Activated B cell treated with CpG ODN at 0.5 μM for 24 hours (primary cell): ENCODE measurements at regions of chr4 and their contacts with region 1.

Region 1: GRCh38 chr4:74133786-74134499 is 24.0 kb upstream of the MTHFD2L start:
- DNase-seq: no peak
- ATAC-seq: no peak
- H3K4me3 Mint-ChIP-seq: no peak overlapping the region
- H3K27ac Mint-ChIP-seq: no peak overlapping the region
- H3K4me1 Mint-ChIP-seq: no peaks in the 10 kb centered on the region
- H3K27me3 Mint-ChIP-seq: peaks cover 20% of the 10 kb centered on the region
- CTCF ChIP-seq: no peak

Region 2: DNA sequence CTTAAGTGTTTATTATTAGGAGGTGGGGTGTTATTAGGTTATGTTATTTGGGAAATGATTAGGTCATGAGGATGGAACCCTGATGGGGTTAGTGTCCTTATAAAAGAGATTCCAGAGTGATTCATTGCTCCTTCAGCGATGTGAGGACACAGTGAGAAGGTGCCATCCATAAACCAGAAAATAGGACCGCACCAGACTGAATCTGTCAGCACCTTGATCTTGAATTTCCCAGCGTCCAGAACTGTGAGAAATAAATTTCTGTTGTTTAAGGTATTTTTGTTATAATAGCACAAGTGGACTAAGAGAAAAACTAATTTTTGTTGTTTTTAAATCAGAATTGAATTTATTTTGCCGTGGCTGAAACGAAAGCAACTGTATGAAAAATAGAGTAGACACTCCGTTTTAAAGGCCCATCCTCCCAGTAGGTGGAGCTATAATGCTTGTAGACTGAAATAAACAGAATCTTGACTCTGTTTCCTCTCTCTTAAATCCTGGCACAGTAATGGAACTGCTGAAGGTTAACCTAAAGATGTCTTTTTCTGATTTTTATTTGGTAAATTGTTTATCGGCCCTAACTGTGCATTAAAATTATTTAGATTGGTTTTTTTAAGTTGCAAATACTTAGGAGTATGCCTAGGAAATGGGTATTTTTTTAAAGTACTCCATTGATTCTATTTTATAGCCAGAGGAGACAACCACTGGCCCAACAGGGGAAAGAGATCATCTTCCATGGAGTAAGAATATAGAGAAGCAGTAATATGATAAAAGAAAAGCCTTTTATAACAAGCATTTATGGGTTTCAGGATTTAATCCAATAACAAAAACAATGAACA is 1431.7 kb before region 1 on chr4:
- CTCF ChIA-PET with region 1: no interaction called
- POLR2A ChIA-PET with region 1: no interaction called
- intact Hi-C with region 1: loop called (anchors 10 kb)
- DNase-seq: no peak
- ATAC-seq: no peak
- H3K4me3 Mint-ChIP-seq: peak overlapping the region; percentile 75
- H3K27ac Mint-ChIP-seq: no peak overlapping the region
- H3K4me1 Mint-ChIP-seq: no peaks in the 10 kb centered on the region
- H3K27me3 Mint-ChIP-seq: peaks cover 6% of the 10 kb centered on the region
- CTCF ChIP-seq: no peak

Region 3: DNA sequence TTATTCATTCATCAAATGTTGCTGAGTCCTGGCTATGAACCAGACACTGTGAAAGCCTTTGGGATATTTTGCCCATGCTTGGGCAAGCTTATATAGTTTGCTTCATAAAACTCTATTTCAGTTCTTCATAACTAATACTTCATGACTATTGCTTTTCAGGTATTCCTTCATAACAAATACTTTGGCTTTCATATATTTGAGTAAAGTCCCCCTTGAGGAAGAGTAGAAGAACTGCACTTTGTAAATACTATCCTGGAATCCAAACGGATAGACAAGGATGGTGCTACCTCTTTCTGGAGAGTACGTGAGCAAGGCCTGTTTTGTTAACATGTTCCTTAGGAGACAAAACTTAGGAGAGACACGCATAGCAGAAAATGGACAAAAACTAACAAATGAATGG is 699.6 kb before region 1 on chr4:
- CTCF ChIA-PET with region 1: no interaction called
- POLR2A ChIA-PET with region 1: no interaction called
- intact Hi-C with region 1: loop called (anchors 10 kb)
- DNase-seq: no peak
- ATAC-seq: no peak
- H3K4me3 Mint-ChIP-seq: no peak overlapping the region
- H3K27ac Mint-ChIP-seq: no peak overlapping the region
- H3K4me1 Mint-ChIP-seq: no peaks in the 10 kb centered on the region
- H3K27me3 Mint-ChIP-seq: peaks cover 8% of the 10 kb centered on the region
- CTCF ChIP-seq: no peak

Region 4: DNA sequence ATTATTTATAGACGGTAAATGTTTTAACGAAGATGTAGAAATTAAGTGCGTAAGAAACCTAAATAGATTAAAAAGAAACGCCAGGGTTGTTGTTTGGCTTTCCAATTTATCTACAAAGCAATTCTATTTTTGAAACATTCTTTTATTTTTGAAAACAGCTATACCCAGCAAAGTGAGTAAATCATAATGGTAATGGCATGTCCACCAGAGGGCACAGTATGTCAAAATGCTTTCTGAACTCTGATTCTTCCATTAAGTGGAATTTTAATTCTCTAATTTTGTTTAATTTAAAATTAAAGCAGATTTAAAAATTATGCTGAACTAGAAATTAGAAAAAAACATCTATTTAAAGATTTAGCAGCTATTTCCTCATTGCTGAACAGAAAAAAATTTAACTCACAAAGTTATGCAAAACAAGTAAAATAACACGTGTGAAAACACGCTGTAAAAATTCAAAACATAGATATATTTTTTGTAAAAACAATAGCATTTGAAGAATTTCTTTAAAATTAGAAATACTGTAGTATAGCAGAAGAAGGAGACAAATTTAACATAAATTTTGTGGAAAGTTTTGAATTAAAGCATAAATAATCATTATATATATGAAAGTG is 540.2 kb before region 1 on chr4:
- CTCF ChIA-PET with region 1: no interaction called
- POLR2A ChIA-PET with region 1: no interaction called
- intact Hi-C with region 1: loop called (anchors 5 kb)
- DNase-seq: no peak
- ATAC-seq: no peak
- H3K4me3 Mint-ChIP-seq: no peak overlapping the region
- H3K27ac Mint-ChIP-seq: no peak overlapping the region
- H3K4me1 Mint-ChIP-seq: peaks cover 34% of the 10 kb centered on the region
- H3K27me3 Mint-ChIP-seq: no peaks in the 10 kb centered on the region
- CTCF ChIP-seq: no peak

Region 5: GRCh38 chr4:73729534-73730165 is 404.3 kb before region 1 on chr4:
- CTCF ChIA-PET with region 1: interaction called, 3 read pairs
- POLR2A ChIA-PET with region 1: no interaction called
- intact Hi-C with region 1: loop called (anchors 1 kb)
- DNase-seq: no peak
- ATAC-seq: no peak
- H3K4me3 Mint-ChIP-seq: no peak overlapping the region
- H3K27ac Mint-ChIP-seq: no peak overlapping the region
- H3K4me1 Mint-ChIP-seq: no peaks in the 10 kb centered on the region
- H3K27me3 Mint-ChIP-seq: peaks cover 7% of the 10 kb centered on the region
- CTCF ChIP-seq: no peak

Region 6: GRCh38 chr4:73853246-73853704 is 280.7 kb before region 1 on chr4 and contains the start of gene PF4V1:
- CTCF ChIA-PET with region 1: no interaction called
- POLR2A ChIA-PET with region 1: no interaction called
- intact Hi-C with region 1: no loop called
- DNase-seq: no peak
- ATAC-seq: no peak
- H3K4me3 Mint-ChIP-seq: no peak within 1 kb of the TSS
- H3K27ac Mint-ChIP-seq: no peak within 1 kb of the TSS
- H3K4me1 Mint-ChIP-seq: no peaks in the 10 kb centered on the region
- H3K27me3 Mint-ChIP-seq: peaks cover 18% of the 10 kb centered on the region
- CTCF ChIP-seq: no peak
- total RNA-seq, gene PF4V1: not detected in 2 replicates